ENCODE measurements at regions of chr19 and their contacts with region 1.

Region 1: GRCh38 chr19:9075064-9075949 is 11.6 kb upstream of the OR1M1 start:
- DNase-seq: peak; percentile 3
- H3K4me3 ChIP-seq: no peak overlapping the region
- H3K27ac ChIP-seq: peak overlapping the region in 3 of 4 donors; percentile 9 to 53 (median 15)
- H3K4me1 ChIP-seq: peaks cover 0 to 19% (median 6%) of the 10 kb centered on the region in 3 donors
- H3K27me3 ChIP-seq: no peaks in the 10 kb centered on the region
- CTCF ChIP-seq: no peak
- POLR2A ChIP-seq: no peak

Region 2: GRCh38 chr19:8654591-8655339 is 420.5 kb before region 1 on chr19:
- intact Hi-C with region 1: loop called (anchors 2 kb)
- DNase-seq: no peak
- H3K4me3 ChIP-seq: peak overlapping the region in 2 of 4 donors; percentile 13 to 29
- H3K27ac ChIP-seq: no peak overlapping the region
- H3K4me1 ChIP-seq: peaks cover 0 to 6% (median 0%) of the 10 kb centered on the region in 3 donors
- H3K27me3 ChIP-seq: peaks cover 0 to 44% (median 0%) of the 10 kb centered on the region in 4 donors
- CTCF ChIP-seq: peak; percentile 83 to 100 (median 96)
- POLR2A ChIP-seq: no peak

Region 3: GRCh38 chr19:9189538-9189937 is 114.2 kb after region 1 on chr19:
- intact Hi-C with region 1: no loop called
- DNase-seq: no peak
- H3K4me3 ChIP-seq: no peak overlapping the region
- H3K27ac ChIP-seq: no peak overlapping the region
- H3K4me1 ChIP-seq: no peaks in the 10 kb centered on the region
- H3K27me3 ChIP-seq: peaks cover 0 to 3% (median 0%) of the 10 kb centered on the region in 4 donors
- CTCF ChIP-seq: no peak
- POLR2A ChIP-seq: no peak

Measured in esophagus squamous epithelium (tissue), 5 donors.